Gastrocnemius medialis (tissue), 4 donors: ENCODE measurements at regions of chr1 and their contacts with region 1.

Region 1: DNA sequence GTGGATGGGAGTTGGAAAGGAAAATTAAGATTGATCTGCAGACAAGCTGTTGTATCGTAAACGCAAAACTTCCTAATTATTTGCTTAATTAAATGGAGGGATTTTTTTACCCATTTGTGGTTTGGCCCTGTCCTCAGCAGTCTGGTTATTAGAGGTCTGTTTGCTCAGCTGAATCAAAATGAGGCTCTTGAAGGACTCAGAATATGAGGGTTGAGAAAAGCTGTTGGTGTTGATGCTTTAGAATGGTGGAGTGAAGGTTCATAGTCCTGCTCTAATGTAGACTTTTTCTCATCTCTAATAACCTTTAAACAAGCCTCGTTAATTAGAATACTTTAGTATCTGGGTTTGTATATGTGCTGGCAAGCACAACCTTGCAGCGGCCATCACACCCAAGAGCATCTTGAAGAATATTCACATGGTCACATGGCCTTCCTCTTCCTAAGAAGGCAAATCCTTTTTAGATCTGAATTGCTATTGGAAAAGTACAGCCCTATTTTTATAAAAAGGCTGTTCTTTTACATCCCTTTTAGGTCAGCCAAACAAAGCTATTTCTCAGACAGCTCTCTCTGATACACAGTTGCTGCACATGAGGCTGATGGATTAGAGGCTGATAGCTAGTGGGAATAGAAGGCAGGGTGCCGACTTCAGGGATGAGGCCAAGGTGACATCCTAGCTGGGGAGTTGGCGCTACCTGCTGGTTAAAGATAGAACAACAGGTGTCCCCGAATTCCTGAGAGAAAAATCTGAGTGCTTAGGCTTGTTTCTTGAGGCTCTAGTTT is 53.8 kb downstream of the MACF1 start:
- DNase-seq: peak; percentile 27 to 68
- ATAC-seq: peak; percentile 69 to 77
- H3K4me3 ChIP-seq: no peak overlapping the region
- H3K27ac ChIP-seq: peak overlapping the region; percentile 29 to 49 (median 34)
- H3K4me1 ChIP-seq: peaks cover 0 to 7% of the 10 kb centered on the region in 2 donors
- H3K27me3 ChIP-seq: no peaks in the 10 kb centered on the region
- CTCF ChIP-seq: peak; percentile 87 to 94 (median 90)
- POLR2A ChIP-seq: no peak

Region 2: GRCh38 chr1:39183503-39184353 is 74.6 kb before region 1 on chr1:
- in situ Hi-C with region 1: loop called in 1 of 4 experiments (anchors 5 kb)
- intact Hi-C with region 1: loop called (anchors 2 kb)
- DNase-seq: peak; percentile 65 to 82
- ATAC-seq: peak; percentile 95 to 96
- H3K4me3 ChIP-seq: no peak overlapping the region
- H3K27ac ChIP-seq: peak overlapping the region; percentile 80 to 91 (median 83)
- H3K4me1 ChIP-seq: peaks cover 33 to 35% of the 10 kb centered on the region in 2 donors
- H3K27me3 ChIP-seq: no peaks in the 10 kb centered on the region
- CTCF ChIP-seq: peak; percentile 36 to 63 (median 58)
- POLR2A ChIP-seq: peak in 1 of 2 donors; percentile 40

Region 3: DNA sequence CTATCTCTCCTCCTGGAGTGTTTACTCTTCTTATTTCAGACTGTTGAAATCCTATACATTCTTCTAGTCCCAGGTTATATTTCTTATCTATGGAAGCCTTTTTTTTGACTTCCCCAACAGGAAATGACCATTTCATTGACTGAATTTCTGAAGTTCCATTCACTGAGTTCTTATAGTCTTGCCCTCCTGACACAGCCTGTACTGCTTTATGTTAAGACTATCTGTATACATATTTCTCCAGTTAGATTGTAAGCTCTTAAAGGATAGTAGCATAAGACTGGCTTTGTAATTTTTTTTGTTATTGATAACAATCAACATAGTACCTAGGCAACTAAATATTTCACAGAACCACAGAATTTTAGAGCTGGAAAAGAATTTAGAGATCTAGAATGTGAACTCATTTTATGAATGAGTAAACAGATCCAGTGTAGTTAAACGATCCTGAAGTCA is 68.7 kb before region 1 on chr1:
- in situ Hi-C with region 1: loop called in 3 of 4 experiments (anchors 5 to 10 kb)
- intact Hi-C with region 1: loop called (anchors 1 kb)
- DNase-seq: no peak
- ATAC-seq: no peak
- H3K4me3 ChIP-seq: no peak overlapping the region
- H3K27ac ChIP-seq: peak overlapping the region in 2 of 4 donors; percentile 18 to 31
- H3K4me1 ChIP-seq: peaks cover 31 to 34% of the 10 kb centered on the region in 2 donors
- H3K27me3 ChIP-seq: no peaks in the 10 kb centered on the region
- CTCF ChIP-seq: no peak
- POLR2A ChIP-seq: no peak

Region 4: GRCh38 chr1:39196244-39197215 is 61.8 kb before region 1 on chr1:
- in situ Hi-C with region 1: loop called (anchors 5 to 10 kb)
- intact Hi-C with region 1: loop called (anchors 1 kb)
- DNase-seq: no peak
- ATAC-seq: no peak
- H3K4me3 ChIP-seq: no peak overlapping the region
- H3K27ac ChIP-seq: no peak overlapping the region
- H3K4me1 ChIP-seq: peaks cover 24 to 35% of the 10 kb centered on the region in 2 donors
- H3K27me3 ChIP-seq: no peaks in the 10 kb centered on the region
- CTCF ChIP-seq: no peak
- POLR2A ChIP-seq: no peak

Region 5: GRCh38 chr1:39214998-39215873 is 43.1 kb before region 1 on chr1:
- in situ Hi-C with region 1: no loop called
- intact Hi-C with region 1: no loop called
- DNase-seq: no peak
- ATAC-seq: no peak
- H3K4me3 ChIP-seq: peak overlapping the region in 1 of 4 donors; percentile 3
- H3K27ac ChIP-seq: peak overlapping the region in 2 of 4 donors; percentile 18 to 47
- H3K4me1 ChIP-seq: peaks cover 30 to 38% of the 10 kb centered on the region in 2 donors
- H3K27me3 ChIP-seq: no peaks in the 10 kb centered on the region
- CTCF ChIP-seq: no peak
- POLR2A ChIP-seq: no peak